Ascending aorta (tissue), 2 donors: ENCODE measurements at regions of chr20 and their contacts with region 1.

Region 1: DNA sequence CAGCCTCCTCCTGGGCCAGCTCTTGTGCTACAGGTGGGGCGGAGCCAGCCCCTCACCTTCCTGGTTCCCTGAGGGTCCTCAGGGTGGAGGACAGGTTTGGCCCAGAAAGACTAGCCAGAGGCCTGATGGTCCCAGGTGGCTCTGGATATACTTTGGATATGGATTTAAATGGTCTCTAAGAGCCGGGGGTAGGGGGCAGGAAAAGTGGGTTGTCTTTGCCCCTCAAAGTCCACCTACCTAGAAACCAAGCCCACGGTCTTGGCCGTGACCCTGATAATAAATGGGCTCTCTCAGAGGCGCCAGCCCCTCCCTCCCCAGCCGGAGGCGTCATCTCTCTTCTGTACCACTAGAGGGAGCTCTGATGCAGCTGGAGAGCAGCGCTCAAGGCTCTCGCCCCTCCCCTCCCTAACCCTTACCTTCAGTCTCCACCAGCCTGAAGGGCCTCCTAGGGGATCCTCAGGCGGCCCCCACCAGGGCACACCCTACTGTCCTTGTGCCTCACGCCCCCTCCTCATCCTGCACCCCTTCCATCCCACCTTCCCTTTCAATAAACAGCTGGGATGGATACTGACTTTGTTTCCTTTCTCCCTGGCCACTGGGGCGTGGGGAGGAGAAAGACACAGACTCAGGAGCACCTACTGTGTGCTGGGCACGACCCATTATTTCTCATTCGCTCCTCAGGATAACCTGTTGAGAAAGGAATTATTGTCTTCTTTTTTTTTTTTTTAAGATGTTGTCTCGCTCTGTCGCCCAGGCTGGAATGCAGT is 7.6 kb downstream of the NRSN2 start:
- DNase-seq: peak in 1 of 2 donors; percentile 89
- H3K4me3 ChIP-seq: no peak overlapping the region
- H3K27ac ChIP-seq: no peak overlapping the region
- H3K4me1 ChIP-seq: no peaks in the 10 kb centered on the region
- H3K27me3 ChIP-seq: no peaks in the 10 kb centered on the region
- CTCF ChIP-seq: peak; percentile 91 to 96 (median 94)

Region 2: DNA sequence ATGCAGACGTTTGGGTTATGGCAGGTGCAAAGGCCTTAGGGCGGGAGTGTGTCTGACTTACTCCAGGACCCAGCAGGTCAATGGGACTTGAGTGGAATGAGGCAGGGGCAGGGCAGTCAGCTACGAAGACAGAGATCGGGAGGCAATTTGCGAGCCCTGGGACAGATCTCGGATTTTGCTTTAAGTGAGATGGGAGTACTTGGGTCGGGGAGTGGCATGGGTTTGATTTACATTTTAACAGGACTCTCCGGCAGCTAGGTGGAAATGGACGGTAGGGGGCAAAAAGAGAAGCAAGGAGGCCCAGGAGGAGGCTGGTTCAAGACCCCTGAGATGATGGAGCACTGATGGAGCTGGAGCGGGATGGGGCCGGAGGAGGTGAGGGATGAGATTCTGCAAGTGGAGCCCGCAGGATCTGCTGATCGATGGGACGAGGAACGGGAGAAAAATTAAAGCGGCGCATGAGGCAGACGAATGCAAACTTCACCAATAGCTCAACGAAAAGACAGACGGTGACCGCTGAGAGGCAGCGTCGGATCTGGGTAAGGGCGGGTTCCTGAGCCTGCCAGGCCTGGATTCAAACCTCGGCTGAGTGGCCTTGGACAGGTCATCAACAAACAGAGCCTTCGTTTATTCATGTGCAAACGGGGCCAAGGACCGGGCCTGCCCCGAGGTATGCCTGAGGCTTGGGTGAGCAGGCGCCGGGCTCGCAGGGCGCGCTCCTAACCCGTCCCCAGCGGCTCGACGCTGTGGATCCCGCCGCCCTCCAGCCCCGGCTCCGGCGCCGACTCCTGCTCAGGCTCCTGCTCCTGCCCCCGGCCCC is 52.9 kb after region 1 on chr20:
- intact Hi-C with region 1: loop called (anchors 1 kb)
- DNase-seq: peak; percentile 20 to 81
- H3K4me3 ChIP-seq: peak overlapping the region; percentile 87 to 90
- H3K27ac ChIP-seq: peak overlapping the region; percentile 90 to 95
- H3K4me1 ChIP-seq: peaks cover 0 to 13% of the 10 kb centered on the region in 2 donors
- H3K27me3 ChIP-seq: no peaks in the 10 kb centered on the region
- CTCF ChIP-seq: peak in 2 of 3 experiments; percentile 7 to 28

Region 3: DNA sequence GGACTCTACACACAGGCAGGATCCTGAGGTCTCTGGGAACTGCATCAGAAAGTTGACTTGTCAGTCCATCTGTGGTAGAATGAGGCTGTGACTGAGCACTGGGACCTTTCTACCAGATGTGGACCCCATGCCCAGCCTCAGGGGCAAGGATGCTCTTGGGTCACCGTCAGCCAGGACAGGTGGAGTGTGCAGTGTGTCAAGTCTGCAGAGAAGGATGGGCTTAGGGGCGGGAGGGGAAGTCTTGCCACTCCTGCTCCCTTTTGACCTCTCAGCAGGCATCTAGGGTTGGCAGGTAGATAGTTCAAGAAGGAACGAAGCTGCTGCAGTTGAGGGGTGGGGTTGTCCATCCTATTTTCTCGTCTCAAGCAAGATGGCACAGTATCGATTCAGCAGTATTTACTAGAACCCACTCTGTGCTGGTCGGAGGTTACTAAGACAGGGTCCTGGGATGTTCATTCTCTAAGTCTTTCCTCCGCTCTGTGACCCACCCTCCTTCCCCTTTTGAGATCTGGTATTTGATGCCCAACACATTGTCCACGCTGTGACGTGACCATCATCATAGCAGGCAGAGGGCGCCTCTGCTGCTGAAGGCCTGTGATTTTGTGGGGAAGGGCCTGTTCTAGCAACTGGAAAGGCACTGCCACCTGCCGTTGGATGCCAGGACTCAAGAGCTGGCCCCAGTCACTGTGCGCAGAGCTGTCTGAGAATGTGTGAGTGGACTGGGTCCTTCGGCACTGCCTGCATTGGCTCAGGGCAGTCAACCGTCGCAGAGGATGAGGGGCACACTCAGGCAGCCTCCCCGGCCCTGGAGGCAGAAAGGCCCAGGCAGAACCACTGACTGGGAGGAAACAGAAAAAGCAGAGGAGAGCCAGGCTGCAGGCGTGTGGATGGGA is 76.8 kb after region 1 on chr20:
- intact Hi-C with region 1: loop called (anchors 1 kb)
- DNase-seq: peak in 1 of 2 donors; percentile 71
- H3K4me3 ChIP-seq: no peak overlapping the region
- H3K27ac ChIP-seq: no peak overlapping the region
- H3K4me1 ChIP-seq: no peaks in the 10 kb centered on the region
- H3K27me3 ChIP-seq: no peaks in the 10 kb centered on the region
- CTCF ChIP-seq: peak; percentile 40 to 61 (median 43)

Region 4: DNA sequence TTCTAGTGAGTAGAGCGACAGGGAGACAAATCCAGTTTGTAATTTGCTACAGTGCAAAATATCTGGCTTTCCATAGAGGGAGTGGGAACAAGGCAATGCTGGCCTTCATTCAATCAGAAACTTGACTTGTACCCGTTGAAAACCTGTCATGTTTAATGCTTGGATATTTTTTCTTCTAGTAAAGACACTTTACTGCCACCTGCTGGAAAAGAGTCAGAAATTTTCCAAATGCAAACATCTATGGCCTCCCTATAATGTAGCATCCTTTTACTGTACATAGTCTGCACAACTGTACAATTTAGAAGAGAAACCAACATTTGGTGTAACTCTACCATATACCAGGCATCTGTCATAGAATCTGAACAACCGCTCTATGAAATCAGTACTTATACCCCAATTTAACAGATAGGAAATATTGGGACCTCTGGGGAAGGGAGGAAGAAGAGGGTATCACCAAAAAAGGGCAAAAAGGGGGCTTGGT is 124.5 kb after region 1 on chr20:
- intact Hi-C with region 1: loop called (anchors 1 kb)
- DNase-seq: no peak
- H3K4me3 ChIP-seq: no peak overlapping the region
- H3K27ac ChIP-seq: no peak overlapping the region
- H3K4me1 ChIP-seq: peaks cover 0 to 7% of the 10 kb centered on the region in 2 donors
- H3K27me3 ChIP-seq: no peaks in the 10 kb centered on the region
- CTCF ChIP-seq: peak; percentile 39 to 64 (median 49)

Region 5: DNA sequence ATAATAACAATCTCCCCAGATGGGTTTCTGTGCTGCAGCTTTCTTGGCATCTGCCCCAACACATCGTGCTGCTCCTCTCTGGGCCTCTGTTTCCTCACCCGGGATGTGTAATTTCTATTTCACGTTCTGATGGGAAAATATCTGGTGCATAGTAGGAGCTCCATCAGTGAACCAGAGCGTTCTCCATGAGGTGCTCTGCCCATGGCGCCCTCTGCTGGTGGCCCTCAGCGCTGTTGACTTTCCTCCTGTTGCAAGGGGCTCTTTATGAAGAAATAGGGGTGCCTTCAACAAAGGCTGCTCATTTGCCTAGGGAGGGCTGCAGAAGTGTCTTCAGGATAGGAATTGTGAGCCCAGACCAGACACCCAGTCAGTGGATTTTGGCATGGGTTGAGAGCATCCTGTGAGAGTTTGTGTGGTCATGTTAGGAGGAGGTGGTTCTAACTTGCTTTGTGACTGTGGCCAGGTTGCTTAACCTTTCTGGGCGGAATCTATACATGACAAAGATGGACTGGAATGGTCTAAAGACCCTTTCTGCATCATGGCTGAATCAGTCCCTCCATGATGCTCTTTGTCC is 313.0 kb after region 1 on chr20:
- intact Hi-C with region 1: loop called (anchors 5 kb)
- DNase-seq: peak in 1 of 2 donors; percentile 72
- H3K4me3 ChIP-seq: no peak overlapping the region
- H3K27ac ChIP-seq: no peak overlapping the region
- H3K4me1 ChIP-seq: no peaks in the 10 kb centered on the region
- H3K27me3 ChIP-seq: peaks cover 22% of the 10 kb centered on the region
- CTCF ChIP-seq: peak; percentile 33 to 66 (median 38)

Region 6: GRCh38 chr20:740141-740540 is 385.7 kb after region 1 on chr20:
- intact Hi-C with region 1: loop called (anchors 5 kb)
- DNase-seq: no peak
- H3K4me3 ChIP-seq: no peak overlapping the region
- H3K27ac ChIP-seq: no peak overlapping the region
- H3K4me1 ChIP-seq: no peaks in the 10 kb centered on the region
- H3K27me3 ChIP-seq: no peaks in the 10 kb centered on the region
- CTCF ChIP-seq: no peak